Kidney (tissue), 22 donors: ENCODE measurements at regions of chr4 and their contacts with region 1.

Region 1: GRCh38 chr4:110201502-110201901 is 3.1 kb upstream of the ELOVL6 start:
- DNase-seq: peak in 3 of 5 donors; percentile 38 to 52 (median 51)
- H3K4me3 ChIP-seq: no peak overlapping the region
- H3K27ac ChIP-seq: no peak overlapping the region
- H3K4me1 ChIP-seq: peaks cover 0 to 2% (median 0%) of the 10 kb centered on the region in 3 donors
- H3K27me3 ChIP-seq: no peaks in the 10 kb centered on the region
- CTCF ChIP-seq: no peak

Region 2: DNA sequence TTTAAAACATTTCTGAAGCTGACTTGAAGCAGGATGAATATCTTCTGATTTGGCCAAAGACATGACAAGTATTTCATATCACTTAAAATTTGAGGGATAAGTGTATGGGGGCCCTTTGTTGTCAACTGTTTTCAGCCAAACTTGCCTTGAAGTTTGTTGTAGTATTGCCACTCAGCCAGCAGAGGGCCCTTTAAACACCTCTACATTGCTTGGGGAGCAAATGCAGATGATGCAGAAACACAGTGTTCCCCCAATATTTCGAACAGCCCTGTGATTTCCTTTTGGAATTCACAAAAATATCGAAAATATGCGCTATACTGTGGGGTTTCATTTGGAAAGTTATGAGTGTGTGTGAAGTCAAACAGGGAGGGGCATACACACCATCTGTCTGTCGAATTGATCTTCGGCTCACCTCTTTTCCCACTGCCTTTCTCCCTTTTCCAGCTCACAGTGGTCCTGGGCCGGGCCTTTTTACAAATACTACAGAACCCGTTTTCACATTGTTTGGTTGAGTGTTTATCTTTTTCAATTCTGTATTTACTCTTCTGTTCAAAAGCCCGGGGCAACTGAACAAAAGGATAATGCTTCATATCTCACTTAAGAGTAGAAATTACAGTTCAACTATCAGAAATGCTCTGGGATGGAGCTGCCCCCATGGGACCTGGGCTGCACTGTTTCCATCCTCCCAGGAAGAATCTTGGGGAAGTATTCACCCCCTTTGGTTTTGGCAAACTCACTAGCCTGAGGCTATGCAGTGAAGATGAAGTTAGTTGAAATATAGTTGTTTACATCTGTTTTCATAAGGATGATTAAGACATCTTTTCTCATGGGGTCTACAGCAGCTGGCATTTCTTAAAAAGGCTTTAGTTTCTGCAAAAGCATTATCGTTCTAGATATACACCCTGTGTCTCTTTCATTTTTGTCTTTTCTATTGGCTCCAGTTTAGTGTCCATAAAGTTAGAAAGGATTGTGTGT is 151.3 kb before region 1 on chr4:
- intact Hi-C with region 1: loop called (anchors 10 kb)
- DNase-seq: peak in 2 of 5 donors; percentile 35 to 60
- H3K4me3 ChIP-seq: no peak overlapping the region
- H3K27ac ChIP-seq: no peak overlapping the region
- H3K4me1 ChIP-seq: no peaks in the 10 kb centered on the region
- H3K27me3 ChIP-seq: no peaks in the 10 kb centered on the region
- CTCF ChIP-seq: peak; percentile 83

Region 3: DNA sequence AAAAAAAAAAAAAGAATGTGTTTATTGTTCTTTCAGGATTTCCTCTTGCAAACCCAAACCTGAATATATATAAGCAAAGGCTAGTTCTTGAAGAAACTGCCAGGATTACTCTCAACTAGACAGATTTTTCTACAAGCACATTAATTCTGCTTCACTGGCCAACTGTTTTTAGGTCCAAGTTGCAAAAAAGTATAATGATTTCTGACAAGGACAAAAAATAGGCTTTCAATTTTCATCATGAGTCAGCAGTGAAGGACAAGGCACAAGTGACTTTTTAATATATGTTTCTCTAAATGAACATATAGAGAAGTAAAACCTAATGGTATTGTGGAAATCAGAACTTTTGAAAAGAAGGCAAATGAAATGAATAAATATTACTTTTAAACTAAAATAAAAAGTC is 76.8 kb before region 1 on chr4:
- intact Hi-C with region 1: no loop called
- DNase-seq: no peak
- H3K4me3 ChIP-seq: no peak overlapping the region
- H3K27ac ChIP-seq: no peak overlapping the region
- H3K4me1 ChIP-seq: no peaks in the 10 kb centered on the region
- H3K27me3 ChIP-seq: no peaks in the 10 kb centered on the region
- CTCF ChIP-seq: no peak